Dorsolateral prefrontal cortex (tissue), 120 donors: ENCODE measurements at regions of chr6 and their contacts with region 1.

Region 1: GRCh38 chr6:143510991-143511891 is at the start of gene FUCA2:
- DNase-seq: peak; percentile 79 to 90 (median 86)
- H3K4me3 ChIP-seq: peak within 1 kb of the TSS; percentile 55 to 94 (median 82)
- H3K27ac ChIP-seq: peak within 1 kb of the TSS; percentile 9 to 94 (median 85)
- H3K27me3 ChIP-seq: no peaks in the 10 kb centered on the region
- CTCF ChIP-seq: peak in 40 of 56 donors; percentile 1 to 60 (median 31)
- total RNA-seq, gene FUCA2: 10.6 to 32.8 (median 18.7) TPM

Region 2: GRCh38 chr6:143397229-143398222 is 113.7 kb before region 1 on chr6:
- intact Hi-C with region 1: no loop called
- DNase-seq: no peak
- H3K4me3 ChIP-seq: no peak overlapping the region
- H3K27ac ChIP-seq: peak overlapping the region in 14 of 59 donors; percentile 2 to 52 (median 36)
- H3K27me3 ChIP-seq: no peaks in the 10 kb centered on the region
- CTCF ChIP-seq: no peak

Region 3: GRCh38 chr6:143450453-143451371 is 60.5 kb before region 1 on chr6 and contains the starts of genes ADAT2 and PEX3:
- intact Hi-C with region 1: loop called (anchors 2 to 10 kb)
- DNase-seq: peak; percentile 83 to 93 (median 90)
- H3K4me3 ChIP-seq: peak within 1 kb of the TSS; percentile 56 to 96 (median 82)
- H3K27ac ChIP-seq: peak within 1 kb of the TSS in 55 of 59 donors; percentile 9 to 89 (median 61)
- H3K27me3 ChIP-seq: no peaks in the 10 kb centered on the region
- CTCF ChIP-seq: peak in 48 of 56 donors; percentile 13 to 59 (median 36)
- total RNA-seq, gene ADAT2: 2.0 to 10.1 (median 5.1) TPM
- total RNA-seq, gene PEX3: 14.5 to 40.6 (median 28.6) TPM